OCI-LY7 (cell line): ENCODE measurements at regions of chr9 and their contacts with region 1.

Region 1: DNA sequence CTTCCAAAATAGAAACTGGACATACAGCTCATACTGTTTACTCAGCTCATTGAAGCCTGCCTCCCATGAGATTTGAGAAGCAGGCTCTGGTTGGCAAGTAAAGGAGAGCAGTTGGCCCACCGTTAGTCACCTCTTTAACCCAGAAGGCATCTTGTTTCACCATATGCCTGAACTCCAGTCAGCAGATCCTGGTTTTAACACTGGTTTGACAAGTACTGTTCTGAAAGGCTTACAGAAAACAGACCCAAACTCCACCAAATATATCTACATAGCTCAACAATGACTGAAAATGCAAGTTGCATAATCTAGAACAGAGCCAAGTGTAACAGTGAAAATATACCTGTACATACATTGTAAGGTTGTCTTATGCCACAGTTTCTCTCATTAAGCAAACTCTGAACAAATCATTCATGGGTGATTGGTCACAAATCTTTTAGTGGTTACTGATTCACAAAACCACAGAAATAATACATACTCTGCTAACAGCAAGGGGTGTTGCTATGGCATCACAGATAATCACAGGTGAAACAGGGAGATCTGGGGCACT is 198.8 kb downstream of the BNC2 start:
- DNase-seq: no peak
- H3K4me3 ChIP-seq: no peak overlapping the region
- H3K27ac ChIP-seq: no peak overlapping the region
- H3K4me1 ChIP-seq: no peaks in the 10 kb centered on the region
- CTCF ChIP-seq: no peak

Region 2: GRCh38 chr9:16601991-16602390 is 69.7 kb before region 1 on chr9:
- CTCF ChIA-PET with region 1: no interaction called
- POLR2A ChIA-PET with region 1: no interaction called
- intact Hi-C with region 1: loop called (anchors 2 kb)
- DNase-seq: no peak
- H3K4me3 ChIP-seq: no peak overlapping the region
- H3K27ac ChIP-seq: no peak overlapping the region
- H3K4me1 ChIP-seq: no peaks in the 10 kb centered on the region
- CTCF ChIP-seq: no peak